Activated naive CD4-positive, alpha-beta T cell treated with anti-CD3 and anti-CD28 coated beads for 36 hours (primary cell): ENCODE measurements at regions of chr5 and their contacts with region 1.

Region 1: GRCh38 chr5:157172403-157172802 is 6.3 kb upstream of the GARIN3 start:
- DNase-seq: peak; percentile 96
- H3K4me3 Mint-ChIP-seq: peak overlapping the region; percentile 64
- H3K27ac Mint-ChIP-seq: peak overlapping the region; percentile 100
- H3K4me1 Mint-ChIP-seq: peaks cover 86% of the 10 kb centered on the region
- H3K27me3 Mint-ChIP-seq: no peaks in the 10 kb centered on the region

Region 2: DNA sequence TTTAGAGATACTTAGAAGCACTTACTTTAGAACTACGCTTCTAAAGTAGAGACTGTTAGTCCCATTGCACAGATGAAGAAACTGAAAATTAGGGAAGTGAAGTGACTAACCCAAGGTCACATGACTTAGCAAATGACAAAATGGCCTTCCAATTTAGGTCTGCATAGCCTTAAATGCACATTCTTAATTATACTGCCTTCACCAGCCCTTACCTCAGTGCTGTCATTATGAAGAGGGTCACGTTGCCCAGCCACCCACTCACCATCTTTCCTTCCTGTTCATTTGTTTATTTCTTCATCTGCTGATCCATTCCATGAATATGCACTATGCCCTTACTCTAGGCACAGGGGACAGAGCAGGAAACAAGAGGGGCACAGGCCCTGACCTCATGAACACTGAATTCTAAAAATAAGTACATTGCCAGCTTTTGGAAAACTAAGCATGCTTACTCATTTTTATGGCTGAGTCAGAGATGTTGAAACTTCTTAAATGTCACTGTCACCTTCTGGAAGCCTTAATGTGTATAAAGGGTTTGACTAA is 72.2 kb before region 1 on chr5:
- CTCF ChIA-PET with region 1: interaction called, 4 read pairs
- intact Hi-C with region 1: loop called (anchors 2 kb)
- DNase-seq: peak; percentile 71
- H3K4me3 Mint-ChIP-seq: peak overlapping the region; percentile 32
- H3K27ac Mint-ChIP-seq: peak overlapping the region; percentile 96
- H3K4me1 Mint-ChIP-seq: peaks cover 29% of the 10 kb centered on the region
- H3K27me3 Mint-ChIP-seq: no peaks in the 10 kb centered on the region

Region 3: GRCh38 chr5:157108976-157109375 is 63.4 kb before region 1 on chr5 and contains the start of gene HAVCR2:
- CTCF ChIA-PET with region 1: no interaction called
- intact Hi-C with region 1: loop called (anchors 1 kb)
- DNase-seq: peak; percentile 87
- H3K4me3 Mint-ChIP-seq: peak within 1 kb of the TSS; percentile 65
- H3K27ac Mint-ChIP-seq: peak within 1 kb of the TSS; percentile 87
- H3K4me1 Mint-ChIP-seq: peaks cover 40% of the 10 kb centered on the region
- H3K27me3 Mint-ChIP-seq: no peaks in the 10 kb centered on the region
- total RNA-seq, gene HAVCR2: 10.2 to 10.4 TPM

Region 4: DNA sequence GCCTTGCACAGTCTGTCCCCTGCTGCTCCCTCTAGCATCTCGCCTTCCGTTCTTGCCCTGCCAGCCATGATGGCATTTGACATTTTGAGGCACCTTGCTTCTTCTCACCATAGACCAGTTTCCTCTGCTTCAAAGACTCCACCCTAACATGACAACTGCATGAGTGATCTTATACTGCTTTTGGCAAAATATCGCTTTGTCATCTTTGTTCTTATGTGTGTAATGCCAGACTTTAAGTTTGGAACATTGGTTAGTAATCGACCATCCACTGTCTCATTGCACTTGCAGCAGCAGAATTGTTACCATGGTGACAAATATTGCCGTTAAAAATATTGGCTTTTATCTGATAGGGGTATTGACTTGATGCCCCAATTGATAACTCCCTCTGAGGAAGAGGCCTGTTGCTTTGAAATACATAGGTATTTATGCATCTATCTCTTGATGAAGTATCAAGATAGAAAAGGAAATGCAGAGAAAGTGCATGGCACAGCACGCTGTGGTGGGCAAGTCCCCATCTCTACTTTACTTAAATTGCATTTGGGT is 13.1 kb before region 1 on chr5:
- CTCF ChIA-PET with region 1: interaction called, 10 read pairs
- intact Hi-C with region 1: loop called (anchors 1 kb)
- DNase-seq: peak; percentile 72
- H3K4me3 Mint-ChIP-seq: peak overlapping the region; percentile 22
- H3K27ac Mint-ChIP-seq: peak overlapping the region; percentile 93
- H3K4me1 Mint-ChIP-seq: peaks cover 76% of the 10 kb centered on the region
- H3K27me3 Mint-ChIP-seq: no peaks in the 10 kb centered on the region

Region 5: DNA sequence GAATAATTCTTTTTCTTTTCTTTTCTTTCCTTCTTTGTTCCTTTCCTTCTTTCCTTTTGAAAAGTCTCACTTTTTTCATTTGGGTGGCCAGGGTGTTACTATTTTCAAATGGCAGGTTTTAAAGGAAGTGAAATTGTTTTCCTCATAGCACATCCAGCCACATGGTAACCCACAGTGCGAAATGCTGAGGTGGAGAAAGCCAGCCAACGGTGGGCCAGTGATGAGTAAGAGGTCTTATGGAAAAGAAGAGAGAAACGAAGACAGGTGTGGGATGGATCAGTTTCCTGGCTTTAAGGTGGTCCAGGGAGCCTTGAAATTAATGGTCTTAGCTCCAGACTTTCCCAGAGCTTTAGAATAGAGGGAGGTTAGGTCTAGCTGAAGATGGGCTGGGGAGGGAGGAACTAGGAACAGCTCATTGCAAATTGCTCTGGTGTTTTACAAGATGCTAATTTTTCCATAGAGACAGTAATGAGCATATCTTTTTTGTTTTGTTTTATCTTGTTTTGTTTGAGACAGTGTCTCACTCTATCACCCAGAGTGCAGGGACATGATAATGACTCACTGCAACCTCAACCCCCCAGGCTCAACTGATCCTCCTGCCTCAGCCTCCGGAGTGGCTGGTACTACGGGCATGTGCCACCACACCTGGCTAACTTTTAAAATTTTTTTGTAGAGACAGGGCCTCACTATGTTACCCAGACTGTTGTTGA is 26.0 kb after region 1 on chr5:
- CTCF ChIA-PET with region 1: interaction called, 4 read pairs
- intact Hi-C with region 1: loop called (anchors 1 kb)
- DNase-seq: peak; percentile 80
- H3K4me3 Mint-ChIP-seq: peak overlapping the region; percentile 48
- H3K27ac Mint-ChIP-seq: peak overlapping the region; percentile 100
- H3K4me1 Mint-ChIP-seq: peaks cover 93% of the 10 kb centered on the region
- H3K27me3 Mint-ChIP-seq: no peaks in the 10 kb centered on the region

Region 6: GRCh38 chr5:157253547-157253946 is 81.1 kb after region 1 on chr5:
- CTCF ChIA-PET with region 1: interaction called, 3 read pairs
- intact Hi-C with region 1: loop called (anchors 1 kb)
- DNase-seq: no peak
- H3K4me3 Mint-ChIP-seq: no peak overlapping the region
- H3K27ac Mint-ChIP-seq: peak overlapping the region; percentile 97
- H3K4me1 Mint-ChIP-seq: peaks cover 91% of the 10 kb centered on the region
- H3K27me3 Mint-ChIP-seq: no peaks in the 10 kb centered on the region